H1 (cell line): ENCODE measurements at regions of chr12 and their contacts with region 1.

Region 1: GRCh38 chr12:49553512-49554088 is 14.3 kb downstream of the MCRS1 start:
- DNase-seq: no peak
- H3K4me3 ChIP-seq: no peak overlapping the region
- H3K27ac ChIP-seq: no peak overlapping the region
- H3K4me1 ChIP-seq: peaks cover 0 to 12% (median 8%) of the 10 kb centered on the region in 4 experiments; a peak in 6 of 7 replicates
- H3K27me3 ChIP-seq: peaks cover 4 to 28% (median 20%) of the 10 kb centered on the region in 4 experiments
- CTCF ChIP-seq: peak in 2 of 3 experiments; percentile 82 to 99; a peak in 3 of 4 replicates
- EP300 ChIP-seq: no peak
- POLR2A ChIP-seq: no peak
- RAD21 ChIP-seq: peak; percentile 75 to 85

Region 2: DNA sequence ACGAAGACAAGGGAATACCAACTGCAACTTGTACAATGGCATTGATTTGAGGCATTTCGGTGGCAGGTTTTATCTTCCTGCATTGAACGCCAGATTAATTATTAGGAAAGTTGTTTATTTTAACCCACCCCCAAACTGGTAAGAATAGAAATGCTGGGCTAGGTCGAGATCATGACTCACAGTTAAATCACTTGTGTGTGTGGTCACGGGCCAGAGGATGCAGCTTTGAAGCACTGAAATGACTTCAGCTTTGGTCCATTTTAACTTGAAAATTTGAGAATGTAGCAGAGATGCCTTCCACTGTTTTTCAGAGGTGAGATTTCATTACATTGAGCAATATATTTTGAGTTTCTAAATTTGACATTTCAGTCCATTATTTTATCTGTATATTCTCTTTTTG is 38.3 kb before region 1 on chr12:
- CTCF ChIA-PET with region 1: interaction called, 20 read pairs
- POLR2A ChIA-PET with region 1: no interaction called
- DNase-seq: no peak
- H3K4me3 ChIP-seq: no peak overlapping the region
- H3K27ac ChIP-seq: no peak overlapping the region
- H3K4me1 ChIP-seq: no peaks in the 10 kb centered on the region
- H3K27me3 ChIP-seq: no peaks in the 10 kb centered on the region
- CTCF ChIP-seq: no peak
- EP300 ChIP-seq: no peak
- POLR2A ChIP-seq: no peak
- RAD21 ChIP-seq: no peak

Region 3: DNA sequence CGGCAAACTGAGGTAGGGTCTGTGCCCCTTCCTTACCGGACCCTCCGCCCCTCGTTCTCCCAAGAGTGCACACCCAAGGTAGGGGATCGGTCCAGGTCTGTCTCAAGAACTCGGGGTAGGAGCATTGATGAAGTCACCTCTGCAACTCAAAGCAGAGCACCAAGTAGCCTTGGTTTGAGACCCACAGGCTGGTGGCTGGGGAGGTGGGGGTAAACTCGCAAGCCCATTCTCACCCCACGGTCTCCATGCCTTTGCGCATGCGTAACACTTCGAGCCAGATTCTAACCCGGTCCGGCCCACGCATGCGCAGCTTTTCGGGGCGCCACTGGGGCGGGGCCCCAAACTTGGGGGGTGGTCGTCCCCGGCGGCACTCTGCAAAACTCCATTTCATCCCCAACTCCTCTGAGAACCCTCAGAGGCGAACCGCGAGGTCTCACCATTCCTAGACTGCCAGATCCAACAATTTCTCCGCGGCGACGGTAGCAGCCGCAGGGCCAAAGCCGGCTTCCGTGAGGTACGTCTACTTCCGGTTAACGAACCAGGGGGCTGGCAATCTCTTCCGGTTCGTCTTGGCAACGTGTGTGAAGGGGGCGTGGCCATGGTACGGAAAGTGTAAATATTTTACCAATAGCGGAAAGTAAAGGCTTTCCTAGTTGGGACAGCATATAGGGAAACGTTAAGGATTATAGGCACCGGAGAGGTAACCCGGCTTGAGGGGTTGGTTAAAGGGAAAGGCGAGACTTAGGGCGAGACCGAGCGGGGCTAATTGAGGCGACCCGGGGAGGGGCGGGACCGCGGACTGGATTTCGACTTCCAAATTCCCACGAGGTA is 14.2 kb after region 1 on chr12 and contains the start of gene MCRS1:
- CTCF ChIA-PET with region 1: interaction called, 115 read pairs
- POLR2A ChIA-PET with region 1: interaction called, 72 read pairs
- DNase-seq: peak; percentile 44 to 92
- H3K4me3 ChIP-seq: peak within 1 kb of the TSS; percentile 75 to 100 (median 96)
- H3K27ac ChIP-seq: peak within 1 kb of the TSS; percentile 89
- H3K4me1 ChIP-seq: no peaks in the 10 kb centered on the region; a peak in 3 of 7 replicates
- H3K27me3 ChIP-seq: no peaks in the 10 kb centered on the region
- CTCF ChIP-seq: no peak
- EP300 ChIP-seq: no peak
- POLR2A ChIP-seq: peak; percentile 95 to 96
- RAD21 ChIP-seq: no peak
- total RNA-seq, gene MCRS1: 90.3 and 92.5 TPM in 2 replicates

Region 4: GRCh38 chr12:49609746-49610089 is 56.1 kb after region 1 on chr12:
- CTCF ChIA-PET with region 1: interaction called, 13 read pairs
- POLR2A ChIA-PET with region 1: no interaction called
- DNase-seq: no peak
- H3K4me3 ChIP-seq: no peak overlapping the region
- H3K27ac ChIP-seq: no peak overlapping the region
- H3K4me1 ChIP-seq: no peaks in the 10 kb centered on the region
- H3K27me3 ChIP-seq: no peaks in the 10 kb centered on the region; a peak in 2 of 7 replicates
- CTCF ChIP-seq: peak in 1 of 3 experiments; percentile 29; a peak in 1 of 4 replicates
- EP300 ChIP-seq: no peak
- POLR2A ChIP-seq: no peak
- RAD21 ChIP-seq: 0 out of 4 replicates have a peak, but pooled peaks of 1 of the 2 experiments have one; percentile 2

Region 5: GRCh38 chr12:49655595-49656236 is 102.1 kb after region 1 on chr12:
- CTCF ChIA-PET with region 1: no interaction called
- POLR2A ChIA-PET with region 1: no interaction called
- DNase-seq: no peak
- H3K4me3 ChIP-seq: no peak overlapping the region
- H3K27ac ChIP-seq: no peak overlapping the region
- H3K4me1 ChIP-seq: no peaks in the 10 kb centered on the region
- H3K27me3 ChIP-seq: no peaks in the 10 kb centered on the region
- CTCF ChIP-seq: no peak
- EP300 ChIP-seq: no peak
- POLR2A ChIP-seq: no peak
- RAD21 ChIP-seq: no peak

Region 6: GRCh38 chr12:49842519-49843352 is 289.1 kb after region 1 on chr12 and contains the start of gene BCDIN3D:
- CTCF ChIA-PET with region 1: no interaction called
- POLR2A ChIA-PET with region 1: no interaction called
- DNase-seq: peak in 1 of 2 experiments; percentile 83
- H3K4me3 ChIP-seq: peak within 1 kb of the TSS; percentile 63 to 90 (median 84)
- H3K27ac ChIP-seq: peak within 1 kb of the TSS; percentile 62
- H3K4me1 ChIP-seq: peaks cover 2 to 5% (median 4%) of the 10 kb centered on the region in 4 experiments; a peak in 4 of 7 replicates
- H3K27me3 ChIP-seq: no peaks in the 10 kb centered on the region
- CTCF ChIP-seq: no peak
- EP300 ChIP-seq: no peak
- POLR2A ChIP-seq: peak in 1 of 2 experiments; percentile 80; a peak in 2 of 3 replicates
- RAD21 ChIP-seq: no peak
- total RNA-seq, gene BCDIN3D: 2.4 and 2.5 TPM in 2 replicates